Caco-2 (cell line): ENCODE measurements at regions of chr1 and their contacts with region 1.

Region 1: DNA sequence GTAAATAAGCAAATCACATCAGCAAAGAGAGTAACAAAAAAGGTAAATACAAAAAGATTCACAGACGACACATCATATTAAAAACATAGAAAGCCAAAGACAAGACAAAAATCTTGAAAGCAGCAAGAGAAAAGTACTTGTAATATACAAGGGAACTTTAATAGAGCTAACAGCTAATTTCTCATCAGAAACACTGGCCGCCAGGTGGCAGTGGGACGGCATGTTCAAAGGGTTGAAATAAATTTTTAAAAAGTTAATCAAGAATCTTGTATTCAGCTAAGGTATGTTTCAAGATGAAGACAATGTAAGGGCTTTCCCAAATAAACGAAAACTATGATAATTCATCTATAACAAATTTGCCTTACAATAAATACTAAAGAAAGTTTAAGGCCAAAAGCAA is 358.1 kb downstream of the LRRIQ3 start:
- DNase-seq: peak in 1 of 2 experiments; percentile 25
- H3K4me3 ChIP-seq: no peak overlapping the region
- H3K4me3 Mint-ChIP-seq: no peak overlapping the region
- H3K27ac Mint-ChIP-seq: no peak overlapping the region
- H3K4me1 ChIP-seq: no peaks in the 10 kb centered on the region
- H3K4me1 Mint-ChIP-seq: no peaks in the 10 kb centered on the region
- H3K27me3 ChIP-seq: no peaks in the 10 kb centered on the region
- H3K27me3 Mint-ChIP-seq: no peaks in the 10 kb centered on the region
- CTCF ChIP-seq: peak in 1 of 2 experiments; percentile 43

Region 2: GRCh38 chr1:73998348-73998959 is 158.5 kb after region 1 on chr1:
- CTCF ChIA-PET with region 1: interaction called, 4 read pairs
- POLR2A ChIA-PET with region 1: no interaction called
- intact Hi-C with region 1: loop called (anchors 1 kb)
- DNase-seq: peak in 1 of 2 experiments; percentile 1
- H3K4me3 ChIP-seq: no peak overlapping the region
- H3K4me3 Mint-ChIP-seq: no peak overlapping the region
- H3K27ac Mint-ChIP-seq: no peak overlapping the region
- H3K4me1 ChIP-seq: no peaks in the 10 kb centered on the region
- H3K4me1 Mint-ChIP-seq: no peaks in the 10 kb centered on the region
- H3K27me3 ChIP-seq: no peaks in the 10 kb centered on the region
- H3K27me3 Mint-ChIP-seq: peaks cover 4% of the 10 kb centered on the region
- CTCF ChIP-seq: peak in 1 of 2 experiments; percentile 16